ENCODE measurements at regions of chr5 and their contacts with region 1.

Region 1: DNA sequence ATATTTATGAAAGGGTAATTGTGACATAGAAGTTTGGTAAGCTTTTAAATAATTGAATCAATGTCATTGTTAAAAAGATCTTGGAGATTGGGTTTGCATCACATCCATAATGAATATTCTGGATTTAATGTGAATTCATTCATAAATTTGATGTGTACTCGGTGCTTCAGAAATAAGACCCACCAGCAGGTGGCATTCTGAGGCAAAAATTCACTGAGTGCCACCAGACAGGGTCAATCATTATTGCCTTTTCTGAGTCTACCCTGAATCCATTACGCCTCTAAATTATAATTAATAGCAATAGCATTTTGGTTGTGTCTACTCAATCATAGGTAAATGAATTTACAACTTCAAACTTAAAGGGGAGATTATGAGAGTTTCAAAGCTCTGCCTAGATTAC is 1.0 kb downstream of the TRPC7 start:
- DNase-seq: peak; percentile 3
- H3K4me3 ChIP-seq: no peak overlapping the region
- H3K27ac ChIP-seq: no peak overlapping the region
- H3K4me1 ChIP-seq: no peaks in the 10 kb centered on the region
- CTCF ChIP-seq: peak; percentile 78

Region 2: GRCh38 chr5:136769900-136770684 is 405.8 kb after region 1 on chr5:
- CTCF ChIA-PET with region 1: no interaction called
- POLR2A ChIA-PET with region 1: no interaction called
- intact Hi-C with region 1: loop called (anchors 10 kb)
- DNase-seq: peak; percentile 62
- H3K4me3 ChIP-seq: no peak overlapping the region
- H3K27ac ChIP-seq: no peak overlapping the region
- H3K4me1 ChIP-seq: no peaks in the 10 kb centered on the region
- CTCF ChIP-seq: peak; percentile 84

Measured in OCI-LY7 (cell line).